ENCODE measurements at regions of chr2 and their contacts with region 1.

Region 1: DNA sequence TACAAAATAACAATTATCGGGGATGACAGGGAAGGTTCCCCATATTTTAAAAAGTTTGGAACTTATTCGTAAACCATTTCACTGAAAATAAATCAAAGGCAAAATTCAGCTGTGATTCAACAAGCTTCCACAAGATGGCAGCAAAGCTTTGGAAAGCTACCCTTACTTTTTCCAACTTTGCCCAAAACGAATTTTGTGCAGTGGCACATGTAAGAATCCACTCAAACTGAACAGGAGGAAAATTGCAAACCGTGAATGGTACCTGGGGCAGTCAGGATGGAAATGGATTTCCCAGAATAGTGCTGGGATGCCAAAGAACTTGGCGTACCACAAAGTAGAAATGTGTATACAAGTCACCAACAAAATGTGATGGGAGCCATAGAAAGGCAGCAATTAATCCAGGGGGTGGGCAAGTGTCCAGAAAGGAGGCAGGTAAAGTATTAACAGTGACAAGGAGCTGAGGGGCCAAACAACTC is 10.7 kb downstream of the RPL31 start:
- DNase-seq: no peak
- CTCF ChIP-seq: peak; percentile 63

Region 2: DNA sequence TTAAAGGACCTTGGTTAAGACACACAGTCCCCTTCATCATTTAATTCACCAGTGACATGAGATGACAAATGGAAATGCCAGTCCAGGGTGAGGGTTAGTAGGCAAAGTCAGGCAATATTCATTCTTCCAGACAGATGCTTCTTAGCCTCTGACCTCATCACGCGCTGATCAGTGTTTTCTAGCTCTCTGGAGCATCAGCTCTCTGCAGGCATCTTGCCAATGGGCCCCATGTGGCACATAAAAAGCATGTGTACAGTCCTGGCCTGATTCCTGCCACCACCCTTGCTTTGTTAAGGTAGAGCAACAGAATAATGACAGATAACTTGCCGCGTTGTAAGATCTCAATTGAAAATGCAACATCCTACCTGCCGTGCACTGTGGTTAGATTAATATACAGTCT is 213.1 kb before region 1 on chr2:
- CTCF ChIA-PET with region 1: no interaction called
- POLR2A ChIA-PET with region 1: no interaction called
- DNase-seq: no peak
- CTCF ChIP-seq: no peak

Region 3: GRCh38 chr2:101001691-101002561 is 10.8 kb before region 1 on chr2 and contains the start of gene RPL31:
- CTCF ChIA-PET with region 1: interaction called, 13 read pairs
- POLR2A ChIA-PET with region 1: interaction called, 20 read pairs
- DNase-seq: peak; percentile 99
- CTCF ChIP-seq: no peak

Region 4: DNA sequence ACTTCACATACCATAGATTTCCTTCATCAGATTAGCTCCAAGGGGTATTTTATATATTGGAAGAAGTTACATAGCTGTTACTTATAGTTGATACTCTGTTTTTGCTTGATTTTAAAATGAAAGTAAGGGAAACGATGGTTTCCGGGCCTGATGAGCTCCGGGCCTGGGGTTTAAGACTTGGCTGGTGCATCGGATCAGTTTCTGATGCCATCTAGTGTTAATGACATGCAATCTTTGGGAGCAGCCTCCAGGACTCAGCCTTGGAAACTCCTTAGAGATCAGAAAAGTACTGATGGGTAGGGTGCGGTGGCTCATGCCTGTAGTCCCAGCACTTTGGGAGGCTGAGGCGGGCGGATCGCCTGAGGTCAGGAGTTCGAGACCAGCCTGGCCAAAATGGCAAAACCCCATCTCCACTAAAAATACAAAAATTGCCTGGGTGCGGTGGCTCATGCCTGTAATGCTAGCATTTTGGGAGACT is 192.8 kb after region 1 on chr2:
- CTCF ChIA-PET with region 1: interaction called, 16 read pairs
- POLR2A ChIA-PET with region 1: no interaction called
- DNase-seq: peak; percentile 57
- CTCF ChIP-seq: peak; percentile 51

Measured in GM10248 (cell line).